HCT116 (cell line): ENCODE measurements at regions of chr2 and their contacts with region 1.

Region 1: GRCh38 chr2:18378020-18378653 is 182.3 kb downstream of the RDH14 start:
- DNase-seq: peak; percentile 19
- ATAC-seq: peak; percentile 84
- H3K4me3 ChIP-seq: no peak overlapping the region
- H3K27ac ChIP-seq: no peak overlapping the region
- H3K4me1 ChIP-seq: no peaks in the 10 kb centered on the region
- H3K27me3 ChIP-seq: peaks cover 29% of the 10 kb centered on the region
- CTCF ChIP-seq: peak; percentile 63 to 84 (median 74); a peak in 5 of 6 replicates
- POLR2A ChIP-seq: no peak
- RAD21 ChIP-seq: peak; percentile 76

Region 2: GRCh38 chr2:17719562-17720371 is 658.4 kb before region 1 on chr2:
- CTCF ChIA-PET with region 1: no interaction called
- POLR2A ChIA-PET with region 1: no interaction called
- RAD21 ChIA-PET with region 1: no interaction called
- intact Hi-C with region 1: loop called (anchors 10 kb)
- DNase-seq: peak; percentile 3
- ATAC-seq: no peak
- H3K4me3 ChIP-seq: no peak overlapping the region
- H3K27ac ChIP-seq: no peak overlapping the region
- H3K4me1 ChIP-seq: no peaks in the 10 kb centered on the region
- H3K27me3 ChIP-seq: no peaks in the 10 kb centered on the region
- CTCF ChIP-seq: peak; percentile 38 to 74 (median 70); a peak in 5 of 6 replicates
- POLR2A ChIP-seq: no peak
- RAD21 ChIP-seq: peak; percentile 61